CD8-positive, alpha-beta T cell (primary cell): ENCODE measurements at regions of chr20 and their contacts with region 1.

Region 1: GRCh38 chr20:36745927-36746659 is at the start of gene NDRG3:
- DNase-seq: peak; percentile 85 to 97 (median 92)
- ATAC-seq: peak; percentile 97
- H3K4me3 ChIP-seq: peak within 1 kb of the TSS; percentile 85 to 87
- H3K4me3 Mint-ChIP-seq: peak within 1 kb of the TSS; percentile 88
- H3K27ac ChIP-seq: peak within 1 kb of the TSS; percentile 44 to 74
- H3K27ac Mint-ChIP-seq: peak within 1 kb of the TSS; percentile 90
- H3K4me1 ChIP-seq: peaks cover 7% of the 10 kb centered on the region
- H3K4me1 Mint-ChIP-seq: peaks cover 29% of the 10 kb centered on the region
- H3K27me3 ChIP-seq: no peaks in the 10 kb centered on the region
- H3K27me3 Mint-ChIP-seq: no peaks in the 10 kb centered on the region
- CTCF ChIP-seq: no peak
- total RNA-seq, gene NDRG3: 12.9 to 15.1 TPM

Region 2: DNA sequence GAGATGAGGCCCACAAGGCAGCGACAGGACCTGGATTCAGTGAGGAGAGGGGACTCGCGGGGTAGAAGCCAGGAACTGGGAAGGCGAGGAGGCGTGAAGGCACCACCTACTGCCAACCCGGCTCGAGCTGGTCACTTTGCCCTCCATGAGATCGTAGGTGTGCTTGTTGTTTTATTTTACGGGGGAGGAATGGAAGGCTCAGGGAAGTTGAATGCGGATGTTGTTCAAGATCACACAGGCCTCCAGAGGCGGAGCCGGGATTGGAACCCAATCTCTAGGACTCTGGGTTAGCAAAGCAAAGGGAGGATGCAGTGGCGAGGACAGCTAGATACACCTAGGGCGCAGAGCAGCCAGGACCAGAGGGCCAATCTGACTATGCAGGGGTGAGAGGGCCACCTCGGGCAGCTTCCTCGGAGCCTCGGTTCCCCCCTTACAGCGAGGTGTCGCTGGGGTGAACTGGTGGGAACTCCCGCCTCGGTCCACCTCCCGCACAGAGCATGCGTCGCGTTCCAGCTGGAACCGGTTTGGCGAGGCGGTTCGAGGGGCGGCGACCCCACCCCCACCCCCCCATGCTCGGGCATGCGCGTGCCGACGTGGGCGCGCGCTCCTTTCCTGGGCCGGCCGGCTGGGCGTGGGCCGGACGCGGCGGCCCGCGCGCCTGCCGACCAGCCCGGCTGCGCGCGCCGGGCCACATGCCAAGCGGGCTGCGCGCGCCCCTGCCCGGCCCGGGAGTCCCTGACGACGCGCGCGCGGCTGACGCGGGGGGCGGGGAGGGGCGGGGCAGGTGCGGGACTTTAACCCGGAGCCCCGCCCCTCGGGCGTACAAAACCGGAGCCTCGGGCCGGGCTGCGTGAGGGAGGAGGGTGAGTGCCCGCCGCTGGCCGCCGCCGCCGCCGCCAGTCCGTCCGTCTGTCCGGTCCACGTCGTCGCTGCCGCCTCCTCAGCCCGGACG is 285.2 kb before region 1 on chr20:
- CTCF ChIA-PET with region 1: no interaction called
- POLR2A ChIA-PET with region 1: no interaction called
- intact Hi-C with region 1: loop called (anchors 1 to 5 kb)
- DNase-seq: peak; percentile 78 to 97 (median 89)
- ATAC-seq: peak; percentile 83
- H3K4me3 ChIP-seq: peak overlapping the region; percentile 47 to 52
- H3K4me3 Mint-ChIP-seq: peak overlapping the region; percentile 80
- H3K27ac ChIP-seq: peak overlapping the region; percentile 69 to 90
- H3K27ac Mint-ChIP-seq: peak overlapping the region; percentile 89
- H3K4me1 ChIP-seq: peaks cover 45% of the 10 kb centered on the region
- H3K4me1 Mint-ChIP-seq: peaks cover 44% of the 10 kb centered on the region
- H3K27me3 ChIP-seq: no peaks in the 10 kb centered on the region
- H3K27me3 Mint-ChIP-seq: no peaks in the 10 kb centered on the region
- CTCF ChIP-seq: no peak

Region 3: GRCh38 chr20:36613974-36614373 is 132.1 kb before region 1 on chr20:
- CTCF ChIA-PET with region 1: interaction called, 6 read pairs
- POLR2A ChIA-PET with region 1: no interaction called
- intact Hi-C with region 1: loop called in 1 of 2 experiments (anchors 2 kb)
- DNase-seq: no peak
- ATAC-seq: no peak
- H3K4me3 ChIP-seq: no peak overlapping the region
- H3K4me3 Mint-ChIP-seq: no peak overlapping the region
- H3K27ac ChIP-seq: no peak overlapping the region
- H3K27ac Mint-ChIP-seq: peak overlapping the region; percentile 55
- H3K4me1 ChIP-seq: no peaks in the 10 kb centered on the region
- H3K4me1 Mint-ChIP-seq: peaks cover 16% of the 10 kb centered on the region
- H3K27me3 ChIP-seq: no peaks in the 10 kb centered on the region
- H3K27me3 Mint-ChIP-seq: no peaks in the 10 kb centered on the region
- CTCF ChIP-seq: no peak

Region 4: GRCh38 chr20:36645998-36646397 is 100.1 kb before region 1 on chr20 and contains the start of gene SLA2:
- CTCF ChIA-PET with region 1: no interaction called
- POLR2A ChIA-PET with region 1: no interaction called
- intact Hi-C with region 1: loop called in 1 of 2 experiments (anchors 1 kb)
- DNase-seq: peak; percentile 49 to 91 (median 76)
- ATAC-seq: peak; percentile 73
- H3K4me3 ChIP-seq: peak within 1 kb of the TSS; percentile 77 to 79
- H3K4me3 Mint-ChIP-seq: peak within 1 kb of the TSS; percentile 98
- H3K27ac ChIP-seq: peak within 1 kb of the TSS; percentile 77 to 84
- H3K27ac Mint-ChIP-seq: peak within 1 kb of the TSS; percentile 98
- H3K4me1 ChIP-seq: peaks cover 41% of the 10 kb centered on the region
- H3K4me1 Mint-ChIP-seq: peaks cover 58% of the 10 kb centered on the region
- H3K27me3 ChIP-seq: no peaks in the 10 kb centered on the region
- H3K27me3 Mint-ChIP-seq: no peaks in the 10 kb centered on the region
- CTCF ChIP-seq: no peak
- total RNA-seq, gene SLA2: 58.5 to 60.3 TPM

Region 5: GRCh38 chr20:36773597-36774390 is 27.7 kb after region 1 on chr20 and contains the start of gene DSN1:
- CTCF ChIA-PET with region 1: no interaction called
- POLR2A ChIA-PET with region 1: interaction called, 3 read pairs
- intact Hi-C with region 1: loop called (anchors 1 kb)
- DNase-seq: peak; percentile 94 to 99 (median 98)
- ATAC-seq: peak; percentile 82
- H3K4me3 ChIP-seq: peak within 1 kb of the TSS; percentile 74 to 80
- H3K4me3 Mint-ChIP-seq: peak within 1 kb of the TSS; percentile 99
- H3K27ac ChIP-seq: peak within 1 kb of the TSS; percentile 66 to 92
- H3K27ac Mint-ChIP-seq: peak within 1 kb of the TSS; percentile 95
- H3K4me1 ChIP-seq: peaks cover 8% of the 10 kb centered on the region
- H3K4me1 Mint-ChIP-seq: peaks cover 11% of the 10 kb centered on the region
- H3K27me3 ChIP-seq: no peaks in the 10 kb centered on the region
- H3K27me3 Mint-ChIP-seq: no peaks in the 10 kb centered on the region
- CTCF ChIP-seq: no peak
- total RNA-seq, gene DSN1: 12.2 to 13.1 TPM

Region 6: DNA sequence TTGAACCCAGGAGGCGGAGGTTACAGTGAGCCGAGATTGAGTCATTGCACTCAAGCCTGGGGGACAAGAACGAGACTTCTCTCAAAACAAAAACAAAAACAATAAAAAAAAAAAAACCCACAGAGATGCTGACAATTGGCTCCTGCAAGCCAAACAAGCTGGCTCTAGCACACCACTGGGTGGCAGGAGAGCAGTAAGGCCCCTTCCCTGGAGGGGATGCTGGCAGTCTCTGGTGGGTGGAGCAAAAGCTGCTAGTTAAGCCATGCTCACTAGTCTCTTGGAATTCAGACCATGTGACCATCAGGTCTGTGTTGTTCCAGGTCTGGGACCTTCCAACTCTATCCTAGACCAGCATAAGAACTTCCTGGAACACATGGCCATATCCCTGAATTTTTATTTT is 46.3 kb after region 1 on chr20:
- CTCF ChIA-PET with region 1: no interaction called
- POLR2A ChIA-PET with region 1: no interaction called
- intact Hi-C with region 1: no loop called
- DNase-seq: no peak
- ATAC-seq: no peak
- H3K4me3 ChIP-seq: no peak overlapping the region
- H3K4me3 Mint-ChIP-seq: no peak overlapping the region
- H3K27ac ChIP-seq: no peak overlapping the region
- H3K27ac Mint-ChIP-seq: no peak overlapping the region
- H3K4me1 ChIP-seq: no peaks in the 10 kb centered on the region
- H3K4me1 Mint-ChIP-seq: no peaks in the 10 kb centered on the region
- H3K27me3 ChIP-seq: no peaks in the 10 kb centered on the region
- H3K27me3 Mint-ChIP-seq: no peaks in the 10 kb centered on the region
- CTCF ChIP-seq: no peak

Region 7: GRCh38 chr20:37288091-37288490 is 542.0 kb after region 1 on chr20:
- CTCF ChIA-PET with region 1: no interaction called
- POLR2A ChIA-PET with region 1: no interaction called
- intact Hi-C with region 1: loop called in 1 of 2 experiments (anchors 5 kb)
- DNase-seq: peak in 1 of 9 experiments; percentile 19
- ATAC-seq: no peak
- H3K4me3 ChIP-seq: no peak overlapping the region
- H3K4me3 Mint-ChIP-seq: peak overlapping the region; percentile 81
- H3K27ac ChIP-seq: no peak overlapping the region
- H3K27ac Mint-ChIP-seq: no peak overlapping the region
- H3K4me1 ChIP-seq: peaks cover 15% of the 10 kb centered on the region
- H3K4me1 Mint-ChIP-seq: peaks cover 30% of the 10 kb centered on the region
- H3K27me3 ChIP-seq: no peaks in the 10 kb centered on the region
- H3K27me3 Mint-ChIP-seq: peaks cover 3% of the 10 kb centered on the region
- CTCF ChIP-seq: no peak